Dorsolateral prefrontal cortex (tissue), 120 donors: ENCODE measurements at regions of chr14 and their contacts with region 1.

Region 1: DNA sequence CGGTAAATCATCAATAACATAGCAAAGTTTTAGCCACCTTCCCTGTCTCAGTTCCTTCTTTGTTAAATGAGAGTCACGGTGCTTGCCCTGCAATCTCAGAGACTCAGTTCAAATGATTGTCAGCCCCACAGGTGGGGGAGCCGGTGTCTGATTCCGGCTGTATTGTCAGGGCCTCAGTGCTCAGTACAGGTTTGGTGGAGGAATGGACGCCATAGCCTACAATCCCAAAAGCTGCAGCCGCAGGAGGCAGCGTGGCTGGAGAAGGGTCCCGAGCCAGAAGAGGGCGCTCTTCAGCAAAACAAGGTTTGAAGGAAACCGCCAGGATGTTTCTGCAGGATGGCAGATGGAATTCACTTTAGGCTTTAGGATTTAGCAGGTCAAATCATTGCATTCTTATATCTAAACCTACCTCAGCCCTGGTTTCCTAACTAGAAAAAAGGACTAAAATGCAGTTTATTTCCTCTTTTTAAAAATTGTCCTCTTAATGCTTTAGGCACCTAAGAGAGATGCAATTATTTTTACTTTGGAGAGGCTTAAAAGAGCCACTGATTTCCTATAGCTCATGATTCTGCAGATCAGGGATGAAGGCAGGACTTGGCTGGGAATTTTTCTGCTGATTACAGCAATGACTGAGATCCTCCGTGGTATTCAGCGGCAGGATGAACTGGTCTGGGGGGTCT is 29.2 kb downstream of the FOS start:
- DNase-seq: peak; percentile 71 to 89 (median 84)
- H3K4me3 ChIP-seq: no peak overlapping the region
- H3K27ac ChIP-seq: peak overlapping the region in 4 of 59 donors; percentile 13 to 55 (median 32)
- H3K27me3 ChIP-seq: no peaks in the 10 kb centered on the region
- CTCF ChIP-seq: peak; percentile 82 to 99 (median 97)

Region 2: GRCh38 chr14:74913986-74914573 is 393.8 kb before region 1 on chr14:
- intact Hi-C with region 1: loop called in 1 of 2 experiments (anchors 10 kb)
- DNase-seq: peak in 6 of 10 donors; percentile 58 to 72 (median 67)
- H3K4me3 ChIP-seq: no peak overlapping the region
- H3K27ac ChIP-seq: peak overlapping the region in 50 of 59 donors; percentile 0 to 84 (median 52)
- H3K27me3 ChIP-seq: no peaks in the 10 kb centered on the region
- CTCF ChIP-seq: peak; percentile 20 to 85 (median 70)

Region 3: DNA sequence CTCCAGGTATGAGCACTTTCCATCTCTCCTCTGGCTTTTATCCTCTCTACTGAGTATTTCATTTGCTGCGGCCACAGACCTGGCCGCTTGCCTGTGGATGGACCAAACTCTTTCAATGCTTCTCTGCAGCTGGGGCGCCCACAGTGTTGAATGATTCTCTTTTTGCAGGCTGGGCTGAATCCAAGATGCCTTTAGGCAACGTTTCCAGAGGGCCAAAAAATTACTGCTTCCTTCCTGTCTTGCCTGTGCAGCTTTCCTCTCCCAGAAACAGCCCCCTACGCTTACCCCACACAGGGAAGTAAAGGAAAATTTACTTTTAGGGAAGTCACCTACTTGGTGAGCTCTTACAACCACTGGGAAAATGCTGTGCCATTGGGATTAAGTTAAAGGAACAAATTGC is 64.4 kb after region 1 on chr14:
- intact Hi-C with region 1: loop called in 1 of 2 experiments (anchors 2 kb)
- DNase-seq: peak; percentile 13 to 83 (median 73)
- H3K4me3 ChIP-seq: peak overlapping the region in 2 of 59 donors; percentile 10 to 17
- H3K27ac ChIP-seq: peak overlapping the region in 19 of 59 donors; percentile 0 to 58 (median 36)
- H3K27me3 ChIP-seq: no peaks in the 10 kb centered on the region
- CTCF ChIP-seq: peak in 8 of 56 donors; percentile 10 to 34 (median 14)

Region 4: GRCh38 chr14:75487155-75487671 is 179.4 kb after region 1 on chr14:
- intact Hi-C with region 1: loop called (anchors 1 kb)
- DNase-seq: no peak
- H3K4me3 ChIP-seq: no peak overlapping the region
- H3K27ac ChIP-seq: no peak overlapping the region
- H3K27me3 ChIP-seq: no peaks in the 10 kb centered on the region
- CTCF ChIP-seq: no peak